ENCODE measurements at regions of chr7 and their contacts with region 1.

Region 1: GRCh38 chr7:129767120-129768015 is 155.8 kb downstream of the NRF1 start:
- DNase-seq: no peak
- H3K4me3 ChIP-seq: no peak overlapping the region
- H3K27ac ChIP-seq: no peak overlapping the region
- H3K4me1 ChIP-seq: no peaks in the 10 kb centered on the region
- H3K27me3 ChIP-seq: no peaks in the 10 kb centered on the region
- CTCF ChIP-seq: no peak

Region 2: GRCh38 chr7:129845178-129845971 is 78.0 kb after region 1 on chr7:
- CTCF ChIA-PET with region 1: no interaction called
- dilution Hi-C with region 1: no loop called
- in situ Hi-C with region 1: no loop called
- intact Hi-C with region 1: no loop called
- DNase-seq: peak; percentile 72
- H3K4me3 ChIP-seq: no peak overlapping the region
- H3K27ac ChIP-seq: peak overlapping the region; percentile 83
- H3K4me1 ChIP-seq: peaks cover 54% of the 10 kb centered on the region
- H3K27me3 ChIP-seq: no peaks in the 10 kb centered on the region
- CTCF ChIP-seq: no peak

Region 3: DNA sequence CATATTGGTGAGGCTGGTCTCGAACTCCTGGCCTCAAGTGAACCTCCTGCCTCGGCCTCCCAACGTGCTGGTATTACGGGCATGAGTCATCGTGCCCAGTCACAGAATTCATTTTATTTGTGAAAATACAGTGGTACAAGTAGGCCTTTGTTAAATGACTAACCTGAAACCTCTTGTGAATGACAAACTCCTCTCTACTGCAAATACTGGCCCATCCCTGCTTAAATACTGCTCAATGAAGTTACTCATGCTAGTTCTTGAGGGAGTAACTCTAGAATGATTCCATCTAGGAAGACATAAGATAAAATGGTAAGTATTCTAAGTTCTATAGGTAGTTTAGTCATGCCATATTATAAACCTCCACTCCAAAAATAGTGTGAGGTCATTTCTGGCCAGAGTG is 104.7 kb after region 1 on chr7:
- CTCF ChIA-PET with region 1: no interaction called
- dilution Hi-C with region 1: no loop called
- in situ Hi-C with region 1: no loop called
- intact Hi-C with region 1: no loop called
- DNase-seq: peak; percentile 77
- H3K4me3 ChIP-seq: no peak overlapping the region
- H3K27ac ChIP-seq: peak overlapping the region; percentile 33
- H3K4me1 ChIP-seq: peaks cover 18% of the 10 kb centered on the region
- H3K27me3 ChIP-seq: no peaks in the 10 kb centered on the region
- CTCF ChIP-seq: no peak

Region 4: DNA sequence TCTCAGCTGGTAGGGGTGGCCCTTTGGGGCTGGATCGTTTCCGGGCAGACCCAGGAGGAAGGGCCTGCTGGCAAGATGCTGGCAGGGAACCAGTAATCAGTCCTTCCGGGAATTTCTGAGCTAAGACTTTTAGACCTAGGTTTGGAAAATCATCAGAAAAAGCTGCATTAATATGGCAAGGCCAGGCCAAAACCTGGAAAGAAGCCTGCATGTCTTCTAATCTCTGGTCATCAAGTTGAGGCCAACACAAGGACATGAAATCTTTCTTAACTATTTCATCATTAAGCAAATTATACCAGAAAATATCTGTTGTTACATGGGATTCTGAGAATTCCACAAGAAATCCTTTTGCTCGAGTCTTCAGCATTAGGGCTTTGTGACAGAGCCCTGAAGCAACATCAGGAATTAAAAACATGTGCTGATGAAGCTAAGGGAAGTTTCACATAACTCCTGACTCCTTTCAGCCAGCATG is 632.8 kb after region 1 on chr7:
- CTCF ChIA-PET with region 1: no interaction called
- dilution Hi-C with region 1: loop called (anchors 10 kb)
- in situ Hi-C with region 1: no loop called
- intact Hi-C with region 1: no loop called
- DNase-seq: no peak
- H3K4me3 ChIP-seq: no peak overlapping the region
- H3K27ac ChIP-seq: no peak overlapping the region
- H3K4me1 ChIP-seq: no peaks in the 10 kb centered on the region
- H3K27me3 ChIP-seq: no peaks in the 10 kb centered on the region
- CTCF ChIP-seq: no peak